ENCODE measurements at regions of chr10 and their contacts with region 1.

Region 1: GRCh38 chr10:133276435-133277201 is at the start of gene ADAM8:
- DNase-seq: peak; percentile 25 to 92
- H3K4me3 ChIP-seq: peak within 1 kb of the TSS; percentile 26 to 60 (median 46)
- H3K27ac ChIP-seq: no peak within 1 kb of the TSS
- H3K4me1 ChIP-seq: peaks cover 0 to 13% (median 7%) of the 10 kb centered on the region in 4 experiments; a peak in 5 of 7 replicates
- H3K27me3 ChIP-seq: peaks cover 0 to 7% (median 4%) of the 10 kb centered on the region in 4 experiments; a peak in 6 of 7 replicates
- CTCF ChIP-seq: peak in 1 of 3 experiments; percentile 1; a peak in 1 of 4 replicates
- EP300 ChIP-seq: no peak
- POLR2A ChIP-seq: no peak
- RAD21 ChIP-seq: no peak; a peak in 1 of 4 replicates
- total RNA-seq, gene ADAM8: 4.4 and 4.6 TPM in 2 replicates

Region 2: DNA sequence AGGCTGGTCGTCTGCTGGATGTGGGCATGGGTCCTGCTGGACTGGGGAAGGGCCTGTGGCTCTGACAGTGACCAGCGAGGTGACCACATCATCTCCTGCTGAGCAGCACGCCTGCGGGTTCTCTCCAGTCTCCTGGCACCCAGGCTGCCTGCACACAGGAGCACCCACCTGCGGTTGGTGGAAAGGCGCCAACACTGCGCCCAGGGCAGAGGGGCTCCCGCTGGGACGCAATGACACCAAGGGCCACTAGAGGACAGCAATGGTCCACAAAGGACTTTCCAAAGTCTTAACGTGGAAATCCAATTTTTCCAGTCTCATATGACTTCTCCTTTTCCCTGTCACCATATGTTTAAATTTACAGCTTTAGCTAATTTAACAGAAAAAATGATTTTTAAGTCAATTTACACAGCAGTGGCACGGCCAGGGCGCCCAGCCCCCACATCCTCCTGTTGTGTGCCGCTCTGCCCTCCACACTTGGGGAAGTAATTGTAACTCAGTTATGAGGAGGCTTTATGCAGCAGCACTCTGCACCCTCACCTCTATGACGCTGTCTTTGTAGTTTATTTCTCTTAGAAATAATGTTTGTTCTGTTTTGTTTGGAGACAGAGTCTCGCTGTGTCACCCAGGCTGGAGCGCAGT is 372.3 kb before region 1 on chr10:
- CTCF ChIA-PET with region 1: no interaction called
- POLR2A ChIA-PET with region 1: no interaction called
- DNase-seq: peak in 1 of 2 experiments; percentile 83
- H3K4me3 ChIP-seq: no peak overlapping the region
- H3K27ac ChIP-seq: no peak overlapping the region
- H3K4me1 ChIP-seq: no peaks in the 10 kb centered on the region; a peak in 1 of 7 replicates
- H3K27me3 ChIP-seq: no peaks in the 10 kb centered on the region
- CTCF ChIP-seq: peak; percentile 86 to 95 (median 87)
- EP300 ChIP-seq: no peak
- POLR2A ChIP-seq: no peak
- RAD21 ChIP-seq: peak; percentile 90 to 91

Region 3: DNA sequence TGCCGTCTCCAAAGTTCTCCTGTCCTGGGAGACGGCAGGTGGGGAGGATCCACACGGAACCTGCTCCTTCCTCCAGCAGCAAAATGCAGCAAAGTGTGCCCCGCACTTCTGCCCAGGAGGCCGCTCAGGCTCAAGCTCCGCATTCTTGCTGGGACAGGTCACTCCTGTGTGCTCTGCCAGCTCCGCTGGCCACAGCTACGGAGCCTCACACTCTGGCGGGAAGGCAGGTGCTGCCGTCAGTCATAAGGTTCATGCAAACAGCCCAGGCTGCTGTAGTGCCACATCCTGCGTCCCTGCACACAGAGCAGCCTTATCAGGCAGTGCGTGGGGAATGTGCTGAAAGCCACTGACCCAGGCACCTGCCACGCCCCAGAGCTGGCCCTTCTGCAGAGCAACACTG is 166.5 kb before region 1 on chr10:
- CTCF ChIA-PET with region 1: no interaction called
- POLR2A ChIA-PET with region 1: no interaction called
- DNase-seq: no peak
- H3K4me3 ChIP-seq: no peak overlapping the region
- H3K27ac ChIP-seq: no peak overlapping the region
- H3K4me1 ChIP-seq: no peaks in the 10 kb centered on the region
- H3K27me3 ChIP-seq: no peaks in the 10 kb centered on the region
- CTCF ChIP-seq: no peak
- EP300 ChIP-seq: no peak
- POLR2A ChIP-seq: no peak
- RAD21 ChIP-seq: no peak

Region 4: DNA sequence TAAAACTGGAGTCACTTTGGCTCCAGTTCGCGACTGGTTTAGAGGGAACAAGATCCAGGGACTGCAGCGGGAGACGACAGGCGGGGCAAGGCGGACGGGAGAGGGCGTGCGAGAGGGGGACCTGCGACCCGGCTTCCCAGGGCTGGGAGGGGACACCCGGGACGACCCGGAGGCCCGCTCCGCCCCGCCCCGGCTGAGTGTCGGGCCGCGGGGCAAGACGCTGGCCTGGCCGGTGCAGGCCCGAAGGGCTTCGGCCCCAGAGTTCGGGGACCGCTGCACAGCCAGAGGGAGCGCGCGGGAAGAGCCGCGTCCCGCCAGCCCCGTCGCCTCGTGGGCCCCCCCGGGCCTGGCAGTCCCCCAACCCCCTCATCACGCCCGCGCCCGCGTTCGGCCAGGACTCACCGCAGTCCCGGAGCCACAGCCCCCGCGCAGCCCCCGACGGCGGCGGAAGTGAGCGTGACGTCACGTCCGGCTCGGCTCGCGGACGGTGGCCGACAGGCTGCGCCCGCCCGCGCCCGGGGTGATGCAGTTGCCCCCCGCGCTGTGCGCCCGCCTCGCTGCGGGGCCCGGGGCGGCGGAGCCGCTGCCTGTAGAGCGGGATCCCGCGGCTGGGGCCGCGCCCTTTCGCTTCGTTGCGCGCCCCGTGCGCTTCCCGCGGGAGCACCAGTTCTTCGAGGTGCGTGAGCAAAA is 31.9 kb after region 1 on chr10 and contains the starts of genes TUBGCP2 and ZNF511:
- CTCF ChIA-PET with region 1: interaction called, 12 read pairs
- POLR2A ChIA-PET with region 1: interaction called, 4 read pairs
- DNase-seq: peak in 1 of 2 experiments; percentile 95
- H3K4me3 ChIP-seq: peak within 1 kb of the TSS; percentile 71 to 85 (median 82)
- H3K27ac ChIP-seq: peak within 1 kb of the TSS; percentile 88; the same call in 1 of the 2 replicates
- H3K4me1 ChIP-seq: peaks cover 0 to 6% (median 4%) of the 10 kb centered on the region in 4 experiments; a peak in 4 of 7 replicates
- H3K27me3 ChIP-seq: no peaks in the 10 kb centered on the region
- CTCF ChIP-seq: peak in 1 of 3 experiments; percentile 32; a peak in 1 of 4 replicates
- EP300 ChIP-seq: peak in 1 of 2 experiments; percentile 40; a peak in 1 of 3 replicates
- POLR2A ChIP-seq: peak; percentile 74 to 85
- RAD21 ChIP-seq: no peak
- total RNA-seq, gene TUBGCP2: 51.9 and 54.2 TPM in 2 replicates
- total RNA-seq, gene ZNF511: 64.5 and 71.7 TPM in 2 replicates

Region 5: GRCh38 chr10:133353202-133353959 is 76.8 kb after region 1 on chr10:
- CTCF ChIA-PET with region 1: no interaction called
- POLR2A ChIA-PET with region 1: no interaction called
- DNase-seq: peak in 1 of 2 experiments; percentile 56
- H3K4me3 ChIP-seq: no peak overlapping the region
- H3K27ac ChIP-seq: no peak overlapping the region
- H3K4me1 ChIP-seq: peaks cover 0 to 15% (median 5%) of the 10 kb centered on the region in 4 experiments; a peak in 4 of 7 replicates
- H3K27me3 ChIP-seq: no peaks in the 10 kb centered on the region; a peak in 1 of 7 replicates
- CTCF ChIP-seq: no peak
- EP300 ChIP-seq: no peak
- POLR2A ChIP-seq: no peak
- RAD21 ChIP-seq: no peak